H1 (cell line): ENCODE measurements at regions of chr3 and their contacts with region 1.

Region 1: DNA sequence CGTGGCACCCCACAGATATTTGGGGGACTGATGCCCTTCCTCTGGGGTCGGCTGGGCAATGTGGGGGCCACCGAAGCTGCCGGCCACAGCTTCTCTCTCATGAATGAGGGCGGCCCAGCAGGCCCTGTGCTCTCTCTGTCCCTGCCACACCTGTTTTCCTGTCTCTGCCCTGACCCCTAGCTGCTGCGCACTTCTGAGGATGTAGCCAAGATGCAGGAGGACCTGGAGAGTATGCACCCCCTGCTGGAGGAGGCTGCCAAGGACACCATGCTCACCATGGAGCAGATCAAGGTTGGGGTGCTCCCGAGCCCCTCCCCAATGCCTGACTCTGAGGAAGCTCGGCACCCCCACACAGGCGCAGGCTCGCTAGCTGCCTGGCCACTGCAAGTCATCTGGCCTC is 59.7 kb downstream of the SEMA3G start:
- DNase-seq: peak; percentile 81 to 85
- H3K4me3 ChIP-seq: no peak overlapping the region
- H3K27ac ChIP-seq: no peak overlapping the region
- H3K4me1 ChIP-seq: peaks cover 0 to 3% (median under 1%) of the 10 kb centered on the region in 4 experiments; a peak in 3 of 7 replicates
- H3K27me3 ChIP-seq: no peaks in the 10 kb centered on the region
- CTCF ChIP-seq: peak in 2 of 3 experiments; percentile 99 to 100; a peak in 3 of 4 replicates
- EP300 ChIP-seq: no peak
- POLR2A ChIP-seq: no peak
- RAD21 ChIP-seq: peak; percentile 78 to 88

Region 2: DNA sequence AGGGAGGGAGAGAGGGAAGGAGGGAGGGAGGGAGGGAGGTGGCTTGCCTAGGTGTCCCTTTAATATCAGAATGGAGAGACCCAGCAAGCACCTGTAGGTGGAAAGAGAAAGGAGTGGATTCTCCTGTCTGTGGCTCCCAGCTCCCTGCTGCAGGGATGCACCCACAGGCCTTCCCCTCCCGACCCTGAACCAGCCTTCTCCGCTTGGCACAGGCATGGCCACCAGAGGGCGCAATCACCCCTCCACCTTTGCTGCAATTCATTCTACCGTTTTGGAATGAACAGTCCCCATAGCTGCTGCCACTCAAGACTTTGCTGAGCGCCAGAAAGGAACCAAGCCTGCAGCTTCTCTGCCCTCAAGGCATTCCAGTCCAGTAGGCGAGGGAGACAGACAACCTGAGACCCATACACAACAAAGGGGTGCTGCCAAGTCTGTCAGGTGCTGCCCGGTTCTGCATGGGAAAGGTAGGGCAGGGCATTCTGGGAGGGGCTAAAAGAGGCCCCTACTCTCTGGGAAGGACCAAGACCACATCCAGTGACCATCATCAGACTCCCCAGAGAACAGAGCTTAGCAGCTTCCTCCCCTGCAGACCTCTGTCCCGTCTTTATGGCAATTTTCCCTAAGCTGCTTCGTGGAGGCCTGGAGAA is 164.7 kb before region 1 on chr3:
- CTCF ChIA-PET with region 1: interaction called, 65 read pairs
- POLR2A ChIA-PET with region 1: interaction called, 3 read pairs
- DNase-seq: peak in 1 of 2 experiments; percentile 96
- H3K4me3 ChIP-seq: no peak overlapping the region
- H3K27ac ChIP-seq: no peak overlapping the region
- H3K4me1 ChIP-seq: peaks cover 0 to 3% (median under 1%) of the 10 kb centered on the region in 4 experiments; a peak in 3 of 7 replicates
- H3K27me3 ChIP-seq: no peaks in the 10 kb centered on the region
- CTCF ChIP-seq: peak in 2 of 3 experiments; percentile 87 to 99; a peak in 3 of 4 replicates
- EP300 ChIP-seq: no peak
- POLR2A ChIP-seq: no peak
- RAD21 ChIP-seq: peak; percentile 78 to 81

Region 3: GRCh38 chr3:52278510-52279069 is 106.6 kb before region 1 on chr3 and contains the start of gene WDR82:
- CTCF ChIA-PET with region 1: interaction called, 24 read pairs
- POLR2A ChIA-PET with region 1: interaction called, 11 read pairs
- DNase-seq: peak; percentile 85 to 99
- H3K4me3 ChIP-seq: peak within 1 kb of the TSS; percentile 94 to 99 (median 97)
- H3K27ac ChIP-seq: peak within 1 kb of the TSS; percentile 98
- H3K4me1 ChIP-seq: peaks cover 0 to 3% (median under 1%) of the 10 kb centered on the region in 4 experiments; a peak in 3 of 7 replicates
- H3K27me3 ChIP-seq: no peaks in the 10 kb centered on the region
- CTCF ChIP-seq: peak; percentile 58 to 74 (median 68)
- EP300 ChIP-seq: no peak
- POLR2A ChIP-seq: peak; percentile 96 to 97
- RAD21 ChIP-seq: peak; percentile 23 to 45; a peak in 3 of 4 replicates
- total RNA-seq, gene WDR82: 77.2 and 82.7 TPM in 2 replicates

Region 4: DNA sequence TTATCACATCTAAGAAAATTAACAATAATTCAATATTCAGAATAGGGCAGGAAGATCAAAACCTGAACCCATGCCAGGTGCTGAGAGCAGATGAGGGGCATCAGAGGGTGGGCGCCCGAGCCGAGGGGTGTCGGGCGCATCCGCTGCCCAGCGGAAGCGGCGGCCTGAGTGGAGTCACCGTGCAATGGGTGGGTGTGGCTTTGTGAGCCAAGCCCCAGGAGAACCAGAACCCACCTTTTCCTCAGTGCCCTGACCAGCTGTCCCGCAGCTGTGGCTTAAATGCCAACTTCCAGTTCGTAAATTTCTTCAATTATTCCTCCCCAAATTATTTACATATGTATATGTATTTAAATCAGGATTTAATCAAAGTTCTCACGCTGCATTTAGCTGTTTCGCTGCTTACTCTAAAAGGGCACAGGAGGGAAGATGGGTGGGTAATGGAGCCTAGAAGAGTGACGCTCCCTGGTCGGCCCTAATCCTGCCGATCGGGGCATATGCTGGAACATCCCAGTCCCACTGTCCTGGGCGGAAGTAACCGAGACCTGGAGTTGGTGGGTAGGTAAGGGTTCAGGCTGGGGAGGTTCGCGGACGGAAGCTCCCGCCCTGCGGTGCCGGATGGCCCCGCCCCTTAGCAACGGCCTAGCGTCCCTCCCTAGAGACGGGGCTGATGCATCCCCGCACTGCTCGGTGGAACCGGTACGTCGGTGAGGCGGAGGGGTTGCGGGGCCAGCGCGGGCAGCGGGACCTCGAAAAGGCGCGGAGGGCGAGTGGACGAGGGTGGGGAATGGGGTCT is 67.8 kb before region 1 on chr3:
- CTCF ChIA-PET with region 1: interaction called, 20 read pairs
- POLR2A ChIA-PET with region 1: interaction called, 3 read pairs
- DNase-seq: peak; percentile 56 to 92
- H3K4me3 ChIP-seq: peak overlapping the region; percentile 39 to 62 (median 48); a peak in 7 of 8 replicates
- H3K27ac ChIP-seq: no peak overlapping the region
- H3K4me1 ChIP-seq: peaks cover 0 to 3% (median 3%) of the 10 kb centered on the region in 4 experiments; a peak in 5 of 7 replicates
- H3K27me3 ChIP-seq: peaks cover 0 to 14% (median 10%) of the 10 kb centered on the region in 4 experiments; a peak in 4 of 7 replicates
- CTCF ChIP-seq: no peak
- EP300 ChIP-seq: no peak
- POLR2A ChIP-seq: peak in 1 of 2 experiments; percentile 49; a peak in 1 of 3 replicates
- RAD21 ChIP-seq: no peak

Region 5: GRCh38 chr3:52339612-52340011 is 45.5 kb before region 1 on chr3:
- CTCF ChIA-PET with region 1: interaction called, 165 read pairs
- POLR2A ChIA-PET with region 1: no interaction called
- DNase-seq: no peak
- H3K4me3 ChIP-seq: no peak overlapping the region
- H3K27ac ChIP-seq: no peak overlapping the region
- H3K4me1 ChIP-seq: no peaks in the 10 kb centered on the region
- H3K27me3 ChIP-seq: no peaks in the 10 kb centered on the region
- CTCF ChIP-seq: peak in 2 of 3 experiments; percentile 57 to 78; a peak in 3 of 4 replicates
- EP300 ChIP-seq: no peak
- POLR2A ChIP-seq: no peak
- RAD21 ChIP-seq: peak; percentile 89

Region 6: DNA sequence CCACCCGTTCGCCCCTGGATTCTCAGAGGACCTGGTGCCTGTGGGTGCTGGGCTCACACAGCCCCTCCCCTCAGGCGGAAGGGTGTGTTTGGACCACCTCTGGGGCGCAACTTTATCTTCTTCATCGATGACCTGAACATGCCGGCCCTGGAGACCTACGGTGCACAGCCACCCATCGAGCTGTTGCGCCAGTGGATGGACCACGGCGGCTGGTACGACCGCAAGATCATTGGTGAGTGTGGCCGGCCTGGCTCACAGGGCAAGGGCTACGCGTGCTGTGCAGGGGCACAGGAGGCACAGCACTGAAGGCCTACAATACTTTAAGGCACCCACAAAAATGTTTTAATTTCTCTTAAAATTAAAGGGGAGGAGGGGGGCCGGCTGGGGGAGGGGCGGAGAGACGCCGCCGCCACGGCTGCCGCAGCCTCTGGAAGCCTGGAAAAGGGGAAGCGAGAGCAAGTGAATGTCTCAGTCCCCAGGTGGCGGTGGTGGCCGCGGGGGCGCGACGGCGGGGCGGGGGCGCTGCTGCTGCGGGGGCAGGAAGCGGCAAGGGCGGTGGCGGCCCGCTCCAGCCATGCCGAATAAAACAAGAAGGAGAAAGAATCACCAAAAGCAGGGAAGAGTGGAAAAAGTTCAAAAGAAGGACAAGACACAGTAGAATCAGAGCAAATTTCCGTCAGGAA is 12.2 kb before region 1 on chr3:
- CTCF ChIA-PET with region 1: interaction called, 271 read pairs
- POLR2A ChIA-PET with region 1: interaction called, 8 read pairs
- DNase-seq: peak in 1 of 2 experiments; percentile 81
- H3K4me3 ChIP-seq: peak overlapping the region in 2 of 4 experiments; percentile 16 to 56; a peak in 5 of 8 replicates
- H3K27ac ChIP-seq: no peak overlapping the region
- H3K4me1 ChIP-seq: peaks cover 0 to 15% (median 5%) of the 10 kb centered on the region in 4 experiments; a peak in 4 of 7 replicates
- H3K27me3 ChIP-seq: peaks cover 0 to 1% (median 0%) of the 10 kb centered on the region in 4 experiments; a peak in 3 of 7 replicates
- CTCF ChIP-seq: peak in 1 of 3 experiments; percentile 35; a peak in 1 of 4 replicates
- EP300 ChIP-seq: no peak
- POLR2A ChIP-seq: no peak
- RAD21 ChIP-seq: no peak

Region 7: GRCh38 chr3:52444860-52445793 is 60.0 kb after region 1 on chr3 and contains the start of gene SEMA3G:
- CTCF ChIA-PET with region 1: interaction called, 109 read pairs
- POLR2A ChIA-PET with region 1: no interaction called
- DNase-seq: peak; percentile 56 to 87
- H3K4me3 ChIP-seq: peak within 1 kb of the TSS in 1 of 4 experiments; percentile 38; a peak in 2 of 8 replicates
- H3K27ac ChIP-seq: no peak within 1 kb of the TSS
- H3K4me1 ChIP-seq: peaks cover 0 to 14% (median 7%) of the 10 kb centered on the region in 4 experiments; a peak in 5 of 7 replicates
- H3K27me3 ChIP-seq: 0 out of 7 replicates have a peak, but pooled peaks cover 0 to 2% (median 0%) of the 10 kb centered on the region in 4 experiments
- CTCF ChIP-seq: peak in 2 of 3 experiments; percentile 73; a peak in 3 of 4 replicates
- EP300 ChIP-seq: no peak
- POLR2A ChIP-seq: peak in 1 of 2 experiments; percentile 71; a peak in 2 of 3 replicates
- RAD21 ChIP-seq: peak in 1 of 2 experiments; percentile 33; a peak in 2 of 4 replicates
- total RNA-seq, gene SEMA3G: 1.5 TPM in 2 replicates